ENCODE measurements at regions of chr13 and their contacts with region 1.

Region 1: GRCh38 chr13:98033277-98034247 is 80.1 kb downstream of the IPO5 start:
- DNase-seq: peak; percentile 24 to 36
- H3K4me3 ChIP-seq: no peak overlapping the region
- H3K27ac ChIP-seq: no peak overlapping the region
- H3K4me1 ChIP-seq: no peaks in the 10 kb centered on the region
- H3K27me3 ChIP-seq: no peaks in the 10 kb centered on the region
- CTCF ChIP-seq: peak; percentile 57

Region 2: DNA sequence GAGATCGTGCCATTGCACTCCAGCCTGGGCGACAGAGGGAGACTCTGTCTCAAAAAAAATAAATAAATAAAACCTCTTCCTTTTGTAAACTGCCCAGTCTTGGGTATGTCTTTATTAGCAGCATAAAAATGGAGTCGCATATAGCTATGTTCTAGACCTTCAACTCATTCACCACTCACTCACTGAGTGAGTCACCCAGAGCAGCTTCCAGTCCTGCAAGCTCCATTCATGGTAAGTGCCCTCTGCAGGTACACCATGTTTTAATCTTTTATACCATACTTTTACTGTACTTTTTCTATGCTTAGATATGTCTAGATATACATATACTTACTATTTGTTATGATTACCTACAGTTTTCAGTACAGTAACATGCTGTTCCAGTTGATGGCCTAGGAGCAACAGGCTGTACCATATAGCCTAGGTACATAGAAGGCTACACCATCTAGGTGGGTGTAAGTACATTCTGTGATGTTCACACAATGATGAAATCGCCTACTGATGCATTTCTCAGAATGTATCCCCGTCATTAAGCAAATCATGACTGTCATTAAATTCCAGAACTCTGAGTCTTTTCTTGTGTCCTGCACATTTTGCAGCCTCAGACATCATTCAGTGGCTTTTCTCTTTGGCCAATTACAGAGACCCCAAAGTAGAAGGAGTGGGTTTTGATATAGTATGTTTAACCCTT is 95.6 kb after region 1 on chr13:
- CTCF ChIA-PET with region 1: no interaction called
- POLR2A ChIA-PET with region 1: interaction called, 29 read pairs
- intact Hi-C with region 1: no loop called
- DNase-seq: peak in 1 of 2 experiments; percentile 36
- H3K4me3 ChIP-seq: no peak overlapping the region
- H3K27ac ChIP-seq: no peak overlapping the region
- H3K4me1 ChIP-seq: no peaks in the 10 kb centered on the region
- H3K27me3 ChIP-seq: no peaks in the 10 kb centered on the region
- CTCF ChIP-seq: no peak

Region 3: GRCh38 chr13:98429977-98430736 is 396.6 kb after region 1 on chr13:
- CTCF ChIA-PET with region 1: no interaction called
- POLR2A ChIA-PET with region 1: no interaction called
- intact Hi-C with region 1: loop called (anchors 5 kb)
- DNase-seq: no peak
- H3K4me3 ChIP-seq: no peak overlapping the region
- H3K27ac ChIP-seq: no peak overlapping the region
- H3K4me1 ChIP-seq: peaks cover 10% of the 10 kb centered on the region
- H3K27me3 ChIP-seq: no peaks in the 10 kb centered on the region
- CTCF ChIP-seq: no peak

Measured in PC-9 (cell line).